Sigmoid colon (tissue), 7 donors: ENCODE measurements at regions of chr22 and their contacts with region 1.

Region 1: GRCh38 chr22:30728826-30729225 is 34.2 kb downstream of the OSBP2 start:
- DNase-seq: no peak
- H3K4me3 ChIP-seq: no peak overlapping the region
- H3K27ac ChIP-seq: no peak overlapping the region
- H3K4me1 ChIP-seq: no peaks in the 10 kb centered on the region
- H3K27me3 ChIP-seq: no peaks in the 10 kb centered on the region
- CTCF ChIP-seq: no peak
- EP300 ChIP-seq: no peak
- POLR2A ChIP-seq: no peak

Region 2: DNA sequence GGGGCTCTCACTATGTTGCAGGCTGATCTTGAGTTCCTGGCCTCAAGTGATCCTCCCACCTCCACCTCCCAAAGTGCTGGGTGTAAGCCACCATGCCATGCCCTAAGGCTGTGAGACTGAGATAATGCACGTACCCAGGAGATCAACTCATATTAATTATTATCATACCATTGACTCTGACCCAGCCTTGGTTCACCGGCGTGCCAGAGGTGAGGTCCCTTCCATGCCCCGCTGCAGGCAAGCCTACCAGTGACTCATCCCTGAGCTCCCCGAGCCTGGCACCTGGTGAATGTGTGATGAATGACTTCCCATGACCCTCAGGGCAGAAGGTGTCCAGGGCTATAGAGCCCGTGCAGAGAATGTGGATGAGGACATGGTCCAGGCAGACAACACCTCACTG is 166.5 kb before region 1 on chr22:
- intact Hi-C with region 1: no loop called
- DNase-seq: no peak
- H3K4me3 ChIP-seq: no peak overlapping the region
- H3K27ac ChIP-seq: no peak overlapping the region
- H3K4me1 ChIP-seq: no peaks in the 10 kb centered on the region
- H3K27me3 ChIP-seq: no peaks in the 10 kb centered on the region
- CTCF ChIP-seq: no peak
- EP300 ChIP-seq: no peak
- POLR2A ChIP-seq: no peak

Region 3: DNA sequence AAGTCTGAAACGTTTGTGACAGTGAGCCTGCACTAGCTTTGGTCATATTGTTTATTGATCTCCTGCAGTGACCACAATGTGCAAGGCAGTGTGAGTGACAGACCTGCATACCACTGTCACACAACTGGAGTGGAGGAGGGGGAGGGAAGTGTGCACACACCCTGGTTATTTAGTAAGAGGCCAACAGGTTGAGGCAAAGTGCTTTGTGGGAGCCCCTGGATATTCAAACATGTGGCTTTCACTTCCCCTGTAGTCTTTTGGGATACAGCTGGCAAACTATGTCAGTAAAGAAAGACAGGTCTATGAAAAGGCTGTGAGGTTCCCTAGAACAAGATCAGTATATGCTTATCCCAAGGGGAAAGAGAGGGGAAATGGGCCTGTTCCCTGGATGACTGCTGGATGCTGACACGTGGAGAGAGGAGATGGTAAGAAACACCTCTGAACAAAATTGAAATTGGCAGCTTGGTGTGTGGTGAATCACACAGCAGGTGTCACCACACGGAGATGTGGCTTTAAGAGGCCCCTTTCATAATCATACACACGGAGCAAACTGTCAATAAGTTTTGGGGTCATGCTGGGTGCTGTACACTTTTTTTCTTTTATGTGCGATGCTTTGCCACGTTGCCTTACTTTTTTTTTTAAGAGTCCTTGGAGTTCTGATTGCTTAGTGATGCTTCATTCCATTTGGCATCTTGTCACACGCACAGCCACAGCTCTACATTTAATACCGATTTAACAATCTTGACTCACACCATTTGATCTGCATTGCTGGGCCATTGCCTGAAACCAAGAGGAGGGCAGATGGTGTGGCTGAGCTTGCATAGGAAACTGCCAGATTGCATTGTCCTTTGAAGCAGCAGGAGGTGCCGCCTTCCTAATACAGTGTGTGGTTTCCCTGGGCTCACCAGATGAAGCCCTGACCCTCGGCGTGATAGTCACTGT is 22.8 kb before region 1 on chr22:
- intact Hi-C with region 1: loop called (anchors 2 kb)
- DNase-seq: no peak
- H3K4me3 ChIP-seq: no peak overlapping the region
- H3K27ac ChIP-seq: no peak overlapping the region
- H3K4me1 ChIP-seq: no peaks in the 10 kb centered on the region
- H3K27me3 ChIP-seq: no peaks in the 10 kb centered on the region
- CTCF ChIP-seq: no peak
- EP300 ChIP-seq: no peak
- POLR2A ChIP-seq: no peak